ENCODE measurements at regions of chr10 and their contacts with region 1.

Region 1: DNA sequence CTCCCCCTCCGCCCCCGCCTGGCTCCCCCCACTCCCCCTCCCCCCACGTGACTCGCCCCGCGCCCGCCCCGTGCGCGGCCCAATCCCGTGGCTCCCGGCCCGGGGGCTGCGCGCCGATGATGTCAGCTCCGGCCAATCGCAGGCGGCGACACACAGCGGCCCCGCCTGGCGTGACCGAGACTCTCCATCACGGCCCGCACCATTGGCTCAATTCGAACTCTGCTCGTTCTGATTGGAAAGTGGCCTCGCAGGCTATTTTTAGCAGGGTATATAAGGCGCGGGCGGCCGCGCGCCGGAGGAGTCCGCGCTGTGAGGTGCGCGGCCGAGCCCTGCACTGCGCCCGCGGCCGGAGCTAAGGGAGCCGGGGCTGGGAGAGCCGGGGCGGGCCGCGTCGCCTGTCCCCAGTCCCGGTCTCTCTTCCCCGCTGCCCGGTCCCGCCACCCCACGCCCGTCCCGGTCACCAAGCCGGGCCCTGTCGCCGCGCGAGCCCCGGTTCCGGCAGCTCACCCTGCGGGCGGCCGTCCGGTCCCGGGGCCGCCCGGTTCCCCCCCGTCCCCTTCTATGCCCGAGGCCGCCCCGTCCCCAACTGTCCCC is 345 bp upstream of the KLF6 start:
- DNase-seq: peak; percentile 99
- ATAC-seq: peak; percentile 70
- H3K4me3 Mint-ChIP-seq: peak overlapping the region; percentile 95
- H3K27ac Mint-ChIP-seq: peak overlapping the region; percentile 98
- H3K4me1 Mint-ChIP-seq: peaks cover 43% of the 10 kb centered on the region
- H3K27me3 Mint-ChIP-seq: no peaks in the 10 kb centered on the region

Region 2: GRCh38 chr10:3605882-3606281 is 179.5 kb before region 1 on chr10:
- CTCF ChIA-PET with region 1: no interaction called
- POLR2A ChIA-PET with region 1: no interaction called
- DNase-seq: no peak
- ATAC-seq: no peak
- H3K4me3 Mint-ChIP-seq: no peak overlapping the region
- H3K27ac Mint-ChIP-seq: no peak overlapping the region
- H3K4me1 Mint-ChIP-seq: no peaks in the 10 kb centered on the region
- H3K27me3 Mint-ChIP-seq: peaks cover 18% of the 10 kb centered on the region

Region 3: DNA sequence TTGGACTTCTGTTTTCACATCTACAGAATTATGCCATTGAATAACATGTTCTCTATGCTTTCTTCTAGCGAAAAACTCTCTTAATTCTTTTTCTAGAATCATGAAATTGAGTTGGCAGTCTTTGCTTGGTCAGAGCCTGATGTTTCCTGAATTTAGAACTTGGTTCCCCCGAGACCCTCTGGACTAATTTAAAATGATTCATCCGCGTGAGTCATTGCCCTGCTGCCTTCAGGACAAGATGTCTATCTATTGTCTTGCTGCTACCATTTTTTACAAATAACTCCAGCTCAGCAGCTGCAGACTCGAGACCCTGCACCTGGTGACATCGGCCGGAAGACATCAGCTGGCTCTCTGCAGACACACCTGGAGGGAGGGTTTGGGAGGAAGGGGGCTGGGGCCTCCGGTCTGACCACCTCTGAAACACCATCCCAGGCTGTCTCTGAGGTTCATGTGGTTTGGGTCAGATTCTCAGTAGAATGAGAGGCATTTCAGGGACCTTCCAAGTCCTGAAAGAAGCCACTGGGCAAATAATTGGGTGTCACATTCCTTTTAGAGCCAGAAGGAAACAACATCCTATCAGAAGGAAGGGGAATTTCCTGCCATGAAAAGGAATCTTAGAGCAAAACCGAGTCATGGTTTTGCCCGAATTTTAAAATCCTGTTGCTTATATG is 20.6 kb after region 1 on chr10:
- CTCF ChIA-PET with region 1: interaction called, 20 read pairs
- POLR2A ChIA-PET with region 1: interaction called, 658 read pairs
- DNase-seq: peak; percentile 62
- ATAC-seq: peak; percentile 6
- H3K4me3 Mint-ChIP-seq: peak overlapping the region; percentile 53
- H3K27ac Mint-ChIP-seq: peak overlapping the region; percentile 98
- H3K4me1 Mint-ChIP-seq: peaks cover 56% of the 10 kb centered on the region
- H3K27me3 Mint-ChIP-seq: no peaks in the 10 kb centered on the region

Region 4: DNA sequence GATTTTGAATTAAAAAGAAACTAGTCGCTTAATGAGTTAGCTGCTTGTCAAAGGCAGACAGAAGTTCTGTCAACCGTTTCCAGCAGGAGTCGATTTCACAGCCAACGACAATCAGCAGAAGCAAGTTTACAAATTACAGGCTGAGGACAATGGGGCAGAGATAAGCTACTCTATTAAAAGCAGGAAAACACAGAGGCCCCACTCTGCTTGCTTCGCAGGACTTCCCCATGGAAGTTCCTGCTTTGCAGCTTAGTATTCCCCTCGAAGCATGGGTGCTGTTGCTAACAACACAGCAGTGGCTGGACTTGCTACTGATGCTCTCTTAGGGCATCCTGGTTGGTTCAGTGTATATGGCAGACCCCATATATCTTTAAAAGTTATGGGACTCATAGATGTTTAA is 50.4 kb after region 1 on chr10:
- CTCF ChIA-PET with region 1: no interaction called
- POLR2A ChIA-PET with region 1: interaction called, 25 read pairs
- DNase-seq: no peak
- ATAC-seq: no peak
- H3K4me3 Mint-ChIP-seq: no peak overlapping the region
- H3K27ac Mint-ChIP-seq: no peak overlapping the region
- H3K4me1 Mint-ChIP-seq: peaks cover 45% of the 10 kb centered on the region
- H3K27me3 Mint-ChIP-seq: no peaks in the 10 kb centered on the region

Region 5: DNA sequence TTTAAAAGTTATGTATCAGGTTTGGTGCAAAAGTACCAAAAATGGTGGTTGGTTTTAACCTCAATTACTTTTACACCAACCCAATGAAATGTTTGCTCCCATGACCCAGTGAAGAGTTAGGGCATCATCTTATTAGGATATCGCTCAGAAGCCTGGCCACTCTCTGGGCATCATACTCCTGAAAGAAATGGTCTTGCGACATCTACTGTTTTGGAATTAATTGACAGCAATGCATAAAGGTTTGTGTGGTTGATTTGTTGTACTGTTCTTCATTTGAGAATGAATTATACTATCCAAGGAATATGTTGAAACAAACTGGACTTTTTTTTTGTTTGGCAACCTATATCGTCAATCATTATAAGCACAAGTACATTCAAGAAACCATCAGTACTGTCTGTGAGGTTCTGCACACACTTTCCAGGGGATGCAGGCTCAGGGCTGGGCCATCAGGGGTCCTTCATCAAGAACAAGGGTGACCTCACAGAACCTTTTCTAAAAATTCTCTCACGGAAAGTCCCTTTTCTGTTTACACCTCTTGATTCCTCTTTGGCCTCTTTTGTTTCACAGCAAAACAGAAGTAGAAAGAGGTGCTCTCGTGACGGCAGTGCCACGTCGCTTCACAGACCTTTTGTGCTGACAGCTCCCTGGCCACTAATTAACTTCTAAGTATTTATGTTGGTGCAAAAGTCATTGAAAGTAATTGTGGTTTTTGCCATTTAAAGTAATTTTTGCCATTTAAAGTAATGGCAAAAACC is 116.9 kb after region 1 on chr10:
- CTCF ChIA-PET with region 1: no interaction called
- POLR2A ChIA-PET with region 1: interaction called, 16 read pairs
- DNase-seq: no peak
- ATAC-seq: peak; percentile 56
- H3K4me3 Mint-ChIP-seq: no peak overlapping the region
- H3K27ac Mint-ChIP-seq: peak overlapping the region; percentile 57
- H3K4me1 Mint-ChIP-seq: peaks cover 22% of the 10 kb centered on the region
- H3K27me3 Mint-ChIP-seq: no peaks in the 10 kb centered on the region

Region 6: DNA sequence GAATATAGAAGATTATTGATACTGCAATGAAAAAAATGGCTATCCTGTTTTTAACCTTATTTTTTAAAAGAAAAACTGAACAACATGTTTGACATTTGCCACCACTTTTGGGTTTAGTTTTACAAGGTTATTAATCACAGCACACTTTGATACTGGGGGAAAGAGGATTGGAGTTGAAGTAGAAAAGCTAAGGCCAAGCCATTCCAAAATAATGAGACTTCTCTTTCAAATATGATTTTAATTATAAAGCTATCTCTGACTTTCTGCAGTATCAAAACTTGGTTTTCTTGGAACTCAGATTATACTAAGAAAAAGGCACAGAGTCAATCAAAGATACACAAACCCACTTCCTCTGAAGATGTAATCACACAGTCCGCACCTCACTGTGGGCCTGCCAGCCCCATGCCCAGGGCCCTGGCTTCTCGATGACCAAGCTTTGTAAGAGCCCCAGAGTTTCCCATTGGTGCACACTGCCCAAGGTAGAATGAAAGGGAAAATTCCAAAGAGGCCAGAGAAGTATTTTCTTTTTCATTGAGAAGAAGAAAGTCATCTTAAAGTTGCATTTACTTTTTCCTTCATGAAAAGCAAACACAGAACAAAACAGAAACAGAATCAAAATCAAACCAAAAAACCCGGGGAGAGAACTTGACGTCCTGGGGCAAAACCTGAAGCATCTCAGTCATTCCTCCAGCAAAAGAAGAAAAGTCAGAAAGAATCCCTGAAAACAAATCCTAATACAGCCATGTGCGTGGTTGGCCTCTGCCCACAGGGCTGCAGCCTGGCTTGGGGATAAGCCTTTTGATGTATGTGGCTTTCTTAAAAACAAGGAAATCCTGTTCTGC is 187.3 kb after region 1 on chr10:
- CTCF ChIA-PET with region 1: interaction called, 3 read pairs
- POLR2A ChIA-PET with region 1: interaction called, 114 read pairs
- DNase-seq: peak; percentile 63
- ATAC-seq: peak; percentile 88
- H3K4me3 Mint-ChIP-seq: peak overlapping the region; percentile 76
- H3K27ac Mint-ChIP-seq: peak overlapping the region; percentile 99
- H3K4me1 Mint-ChIP-seq: peaks cover 61% of the 10 kb centered on the region
- H3K27me3 Mint-ChIP-seq: no peaks in the 10 kb centered on the region

Measured in activated CD8-positive, alpha-beta T cell treated with anti-CD3 and anti-CD28 coated beads, Interleukin-2, amount 10 ng/mL, durations not matched to agents 7 days and 5 days (primary cell).